ENCODE measurements at regions of chr4 and their contacts with region 1.

Region 1: DNA sequence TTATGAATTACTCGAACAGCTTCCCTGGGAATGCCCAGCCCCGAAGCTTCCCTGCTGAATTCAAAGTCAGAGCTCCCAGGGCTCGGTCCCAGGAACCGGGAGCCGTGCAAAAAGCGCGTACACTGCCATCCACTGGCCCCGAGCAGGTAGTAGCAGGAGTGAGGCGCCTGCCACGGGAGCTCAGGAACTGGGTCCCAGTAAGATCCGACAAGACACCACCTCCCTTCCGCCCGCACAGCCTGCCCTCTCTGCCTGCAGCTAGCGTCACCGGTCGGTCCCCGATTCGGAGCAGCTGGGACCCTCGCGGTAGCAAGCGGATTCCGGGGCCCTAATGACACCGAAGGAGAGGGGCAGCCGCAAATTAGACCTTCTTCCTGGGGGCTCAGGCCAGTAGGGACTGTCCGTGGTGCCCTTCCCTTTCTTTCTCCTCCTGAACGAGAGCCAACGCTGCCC is 1.2 kb downstream of the CORIN start:
- DNase-seq: peak; percentile 83
- H3K4me3 Mint-ChIP-seq: peak overlapping the region; percentile 88
- H3K27ac Mint-ChIP-seq: no peak overlapping the region
- H3K4me1 Mint-ChIP-seq: peaks cover 17% of the 10 kb centered on the region
- H3K27me3 Mint-ChIP-seq: peaks cover 40% of the 10 kb centered on the region

Region 2: GRCh38 chr4:47463235-47463956 is 373.3 kb before region 1 on chr4 and contains the start of gene COMMD8:
- intact Hi-C with region 1: loop called (anchors 10 kb)
- DNase-seq: peak; percentile 99
- H3K4me3 Mint-ChIP-seq: peak within 1 kb of the TSS; percentile 88
- H3K27ac Mint-ChIP-seq: peak within 1 kb of the TSS; percentile 77
- H3K4me1 Mint-ChIP-seq: peaks cover 22% of the 10 kb centered on the region
- H3K27me3 Mint-ChIP-seq: no peaks in the 10 kb centered on the region
- total RNA-seq, gene COMMD8: 17.6 and 17.8 TPM in 2 replicates

Region 3: DNA sequence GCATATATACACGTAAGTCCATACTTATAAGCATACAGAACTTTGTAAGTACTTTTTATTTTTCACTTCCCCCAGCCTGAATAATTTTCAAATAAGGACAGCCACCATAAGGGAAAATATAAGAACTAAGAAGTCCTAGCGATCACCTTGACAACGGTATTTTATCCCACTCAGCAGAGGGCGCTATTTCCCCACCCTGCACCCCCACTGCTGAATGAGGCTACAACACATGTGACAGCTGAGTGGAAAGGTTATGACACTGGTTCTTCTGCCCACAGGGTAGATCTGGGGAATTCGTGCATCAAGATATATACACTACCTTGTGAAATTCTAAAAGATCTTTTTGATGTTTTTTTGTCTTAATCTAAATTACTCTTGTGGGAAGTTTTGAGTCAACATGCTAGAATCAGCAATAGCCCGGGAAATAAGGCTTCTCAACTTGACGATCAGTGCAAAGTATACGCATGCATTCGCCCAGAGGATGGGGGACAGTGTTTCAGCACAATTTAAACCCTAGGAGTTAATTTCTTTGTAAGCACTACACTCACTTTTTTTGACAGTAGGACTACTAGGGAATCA is 150.3 kb before region 1 on chr4:
- intact Hi-C with region 1: loop called (anchors 1 kb)
- DNase-seq: peak; percentile 88
- H3K4me3 Mint-ChIP-seq: no peak overlapping the region
- H3K27ac Mint-ChIP-seq: no peak overlapping the region
- H3K4me1 Mint-ChIP-seq: peaks cover 3% of the 10 kb centered on the region
- H3K27me3 Mint-ChIP-seq: peaks cover 17% of the 10 kb centered on the region

Region 4: GRCh38 chr4:47704693-47705325 is 131.9 kb before region 1 on chr4:
- intact Hi-C with region 1: loop called (anchors 1 kb)
- DNase-seq: peak; percentile 57
- H3K4me3 Mint-ChIP-seq: no peak overlapping the region
- H3K27ac Mint-ChIP-seq: no peak overlapping the region
- H3K4me1 Mint-ChIP-seq: no peaks in the 10 kb centered on the region
- H3K27me3 Mint-ChIP-seq: peaks cover 42% of the 10 kb centered on the region

Region 5: GRCh38 chr4:47762376-47763266 is 74.0 kb before region 1 on chr4:
- intact Hi-C with region 1: no loop called
- DNase-seq: no peak
- H3K4me3 Mint-ChIP-seq: no peak overlapping the region
- H3K27ac Mint-ChIP-seq: no peak overlapping the region
- H3K4me1 Mint-ChIP-seq: no peaks in the 10 kb centered on the region
- H3K27me3 Mint-ChIP-seq: no peaks in the 10 kb centered on the region

Region 6: GRCh38 chr4:47873877-47874541 is 37.3 kb after region 1 on chr4:
- intact Hi-C with region 1: loop called (anchors 1 kb)
- DNase-seq: no peak
- H3K4me3 Mint-ChIP-seq: no peak overlapping the region
- H3K27ac Mint-ChIP-seq: peak overlapping the region; percentile 43
- H3K4me1 Mint-ChIP-seq: peaks cover 9% of the 10 kb centered on the region
- H3K27me3 Mint-ChIP-seq: no peaks in the 10 kb centered on the region

Region 7: DNA sequence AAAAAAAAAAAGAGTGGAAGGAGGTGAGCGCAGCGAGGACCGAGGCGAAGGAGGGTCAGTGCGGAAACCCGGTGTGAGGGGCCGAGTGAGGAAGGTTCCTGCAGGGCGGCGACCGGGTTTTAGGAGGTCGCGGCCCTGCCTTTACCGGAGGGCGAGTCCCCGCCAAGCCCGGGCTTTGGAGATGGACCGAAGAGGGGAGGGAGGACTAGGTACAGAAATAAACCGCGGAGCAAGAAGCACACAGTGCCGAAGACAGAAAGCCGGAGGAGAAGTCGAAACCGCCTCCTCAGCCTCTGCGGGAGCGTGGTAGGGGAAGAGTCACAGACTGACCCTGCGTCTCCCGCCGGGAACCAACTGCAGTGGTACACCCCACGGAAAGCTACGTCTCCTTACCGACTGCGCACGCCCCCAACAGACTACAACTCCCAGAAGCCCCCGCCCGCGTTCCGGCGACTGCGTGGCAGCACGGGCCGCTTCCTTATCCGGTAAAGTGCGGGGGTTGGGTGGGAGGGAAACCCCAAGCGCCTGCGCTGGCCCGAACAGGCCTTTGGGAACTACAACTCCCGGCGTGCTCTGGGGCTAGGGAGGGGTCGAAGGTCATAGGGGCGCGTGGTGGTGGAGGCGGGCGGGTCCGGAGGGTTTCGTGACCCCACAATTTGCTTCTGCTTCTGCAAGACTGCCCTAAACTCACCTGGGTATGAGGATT is 77.7 kb after region 1 on chr4 and contains the start of gene NFXL1:
- intact Hi-C with region 1: loop called (anchors 2 kb)
- DNase-seq: peak; percentile 98
- H3K4me3 Mint-ChIP-seq: peak within 1 kb of the TSS; percentile 84
- H3K27ac Mint-ChIP-seq: peak within 1 kb of the TSS; percentile 91
- H3K4me1 Mint-ChIP-seq: peaks cover 25% of the 10 kb centered on the region
- H3K27me3 Mint-ChIP-seq: peaks cover 7% of the 10 kb centered on the region
- total RNA-seq, gene NFXL1: 11.2 and 15.0 TPM in 2 replicates

Region 8: GRCh38 chr4:47933840-47934239 is 97.2 kb after region 1 on chr4:
- intact Hi-C with region 1: loop called (anchors 5 kb)
- DNase-seq: no peak
- H3K4me3 Mint-ChIP-seq: no peak overlapping the region
- H3K27ac Mint-ChIP-seq: no peak overlapping the region
- H3K4me1 Mint-ChIP-seq: peaks cover 1% of the 10 kb centered on the region
- H3K27me3 Mint-ChIP-seq: peaks cover 16% of the 10 kb centered on the region

Measured in activated CD4-positive, alpha-beta T cell treated with anti-CD3 and anti-CD28 coated beads, Interleukin-2, amount 10 ng/mL, durations not matched to agents 24 days and 14 days (primary cell).